CD4-positive, alpha-beta T cell (primary cell): ENCODE measurements at regions of chr11 and their contacts with region 1.

Region 1: DNA sequence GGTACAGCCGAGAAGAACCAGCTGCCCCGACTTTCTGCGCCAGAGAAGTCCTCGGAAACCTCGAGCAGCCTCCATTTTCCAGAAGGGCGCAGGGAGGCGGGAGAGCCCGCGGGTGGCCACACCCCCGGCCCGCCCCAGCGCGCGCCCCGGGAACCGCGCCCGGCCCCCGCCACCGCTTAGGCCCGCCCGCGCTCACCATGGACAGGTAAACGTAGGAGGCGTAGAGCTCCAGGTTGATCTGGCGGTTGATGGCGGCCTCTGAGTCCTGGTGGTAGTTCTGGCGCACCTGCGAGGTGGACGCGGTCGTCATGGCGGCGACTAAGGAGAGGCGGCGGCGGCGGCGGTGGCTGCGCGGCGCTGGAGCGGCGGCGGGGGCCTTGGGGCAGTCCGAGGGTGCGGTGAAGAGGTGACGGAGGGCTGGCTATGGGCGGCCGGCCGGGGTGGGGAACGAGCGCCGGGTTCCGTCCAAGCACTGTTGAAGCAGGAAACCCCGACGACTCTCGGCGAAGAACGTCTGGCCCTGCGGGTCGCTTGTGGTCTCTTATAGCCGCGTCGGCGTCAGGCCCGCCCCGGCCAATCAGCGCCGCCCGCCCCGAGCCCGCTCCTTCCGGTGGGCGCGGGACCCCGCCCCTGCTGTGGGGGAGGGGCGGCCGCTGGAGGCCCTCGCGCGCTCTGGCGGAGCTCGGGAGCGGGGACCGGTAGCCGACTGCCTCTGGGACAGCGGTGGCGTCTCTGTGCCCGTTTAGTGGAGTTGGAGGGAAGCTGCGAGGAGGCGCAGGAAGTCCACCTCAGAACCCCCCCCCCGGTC is at the start of gene FTH1:
- DNase-seq: peak; percentile 83 to 96 (median 91)
- ATAC-seq: peak; percentile 71
- H3K4me3 ChIP-seq: peak within 1 kb of the TSS; percentile 98
- H3K4me3 Mint-ChIP-seq: peak within 1 kb of the TSS; percentile 99
- H3K27ac ChIP-seq: peak within 1 kb of the TSS; percentile 87 to 94
- H3K27ac Mint-ChIP-seq: peak within 1 kb of the TSS; percentile 84
- H3K4me1 ChIP-seq: peaks cover 61% of the 10 kb centered on the region
- H3K4me1 Mint-ChIP-seq: peaks cover 74% of the 10 kb centered on the region
- H3K27me3 ChIP-seq: no peaks in the 10 kb centered on the region
- H3K27me3 Mint-ChIP-seq: peaks cover 4% of the 10 kb centered on the region
- CTCF ChIP-seq: no peak
- total RNA-seq, gene FTH1: 2,313 to 2,400 TPM

Region 2: GRCh38 chr11:61581030-61581928 is 386.0 kb before region 1 on chr11 and contains the start of gene SYT7:
- CTCF ChIA-PET with region 1: no interaction called
- POLR2A ChIA-PET with region 1: no interaction called
- intact Hi-C with region 1: loop called in 1 of 2 experiments (anchors 10 kb)
- DNase-seq: peak; percentile 86 to 96 (median 94)
- ATAC-seq: peak; percentile 86
- H3K4me3 ChIP-seq: peak within 1 kb of the TSS; percentile 28
- H3K4me3 Mint-ChIP-seq: peak within 1 kb of the TSS; percentile 97
- H3K27ac ChIP-seq: no peak within 1 kb of the TSS
- H3K27ac Mint-ChIP-seq: peak within 1 kb of the TSS; percentile 78
- H3K4me1 ChIP-seq: peaks cover 19% of the 10 kb centered on the region
- H3K4me1 Mint-ChIP-seq: peaks cover 9% of the 10 kb centered on the region
- H3K27me3 ChIP-seq: peaks cover 23 to 27% of the 10 kb centered on the region in 2 experiments
- H3K27me3 Mint-ChIP-seq: peaks cover 57% of the 10 kb centered on the region
- CTCF ChIP-seq: no peak
- total RNA-seq, gene SYT7: not detected

Region 3: GRCh38 chr11:61947486-61948210 is 19.7 kb before region 1 on chr11:
- CTCF ChIA-PET with region 1: interaction called, 12 read pairs
- POLR2A ChIA-PET with region 1: interaction called, 20 read pairs
- intact Hi-C with region 1: no loop called
- DNase-seq: peak; percentile 42 to 81 (median 58)
- ATAC-seq: peak; percentile 87
- H3K4me3 ChIP-seq: no peak overlapping the region
- H3K4me3 Mint-ChIP-seq: no peak overlapping the region
- H3K27ac ChIP-seq: no peak overlapping the region
- H3K27ac Mint-ChIP-seq: no peak overlapping the region
- H3K4me1 ChIP-seq: peaks cover 8% of the 10 kb centered on the region
- H3K4me1 Mint-ChIP-seq: no peaks in the 10 kb centered on the region
- H3K27me3 ChIP-seq: peaks cover 0 to 3% of the 10 kb centered on the region in 2 experiments
- H3K27me3 Mint-ChIP-seq: peaks cover 16% of the 10 kb centered on the region
- CTCF ChIP-seq: peak; percentile 70

Region 4: GRCh38 chr11:62025487-62026105 is 58.3 kb after region 1 on chr11:
- CTCF ChIA-PET with region 1: interaction called, 11 read pairs
- POLR2A ChIA-PET with region 1: interaction called, 177 read pairs
- intact Hi-C with region 1: loop called (anchors 1 kb)
- DNase-seq: peak; percentile 45 to 98 (median 72)
- ATAC-seq: peak; percentile 84
- H3K4me3 ChIP-seq: peak overlapping the region; percentile 9
- H3K4me3 Mint-ChIP-seq: peak overlapping the region; percentile 43
- H3K27ac ChIP-seq: peak overlapping the region; percentile 85 to 98
- H3K27ac Mint-ChIP-seq: peak overlapping the region; percentile 95
- H3K4me1 ChIP-seq: peaks cover 33% of the 10 kb centered on the region
- H3K4me1 Mint-ChIP-seq: peaks cover 29% of the 10 kb centered on the region
- H3K27me3 ChIP-seq: no peaks in the 10 kb centered on the region
- H3K27me3 Mint-ChIP-seq: no peaks in the 10 kb centered on the region
- CTCF ChIP-seq: no peak

Region 5: DNA sequence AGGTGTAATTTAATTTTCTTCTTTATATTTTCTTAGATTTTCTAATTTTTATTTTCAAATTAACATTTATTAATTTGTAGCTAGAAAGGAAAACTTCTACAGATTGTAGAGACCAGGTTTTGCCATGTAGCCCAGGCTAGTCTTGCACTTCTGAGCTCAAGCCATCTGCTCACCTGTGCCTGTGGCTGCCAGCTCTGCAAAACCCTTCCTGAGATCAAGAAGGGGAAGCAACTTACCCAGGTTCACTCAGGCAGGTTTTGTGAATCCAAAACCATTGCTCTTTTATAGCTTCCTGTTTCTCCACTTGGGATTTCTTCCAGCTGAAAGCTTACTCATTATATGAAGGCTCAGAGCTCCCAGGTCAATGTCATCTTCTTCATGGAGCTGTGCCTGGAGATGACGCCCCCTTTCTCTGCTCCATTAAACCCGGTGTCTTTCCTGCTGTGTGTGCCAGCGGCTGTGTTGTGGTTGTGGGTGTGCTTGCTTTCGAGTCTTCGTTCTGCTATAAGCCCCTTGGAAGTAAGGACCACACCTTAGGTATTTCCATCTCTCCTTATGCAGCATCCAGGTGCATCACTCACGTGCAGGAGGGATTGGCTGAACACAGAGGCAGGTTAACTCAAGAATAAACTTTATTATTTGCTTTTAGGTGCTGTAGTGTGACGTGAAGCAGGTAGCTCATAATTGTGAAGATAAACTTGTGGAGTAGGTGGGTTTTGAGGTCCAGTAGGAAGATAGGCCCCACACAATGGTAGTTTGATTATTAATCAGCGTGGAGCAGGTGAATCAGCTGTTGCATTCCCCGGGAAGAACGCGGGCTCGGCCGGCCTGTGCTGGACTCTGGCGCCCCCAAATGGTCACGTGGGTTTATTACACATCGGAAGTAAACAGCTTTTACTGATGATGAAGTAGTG is 114.3 kb after region 1 on chr11:
- CTCF ChIA-PET with region 1: interaction called, 50 read pairs
- POLR2A ChIA-PET with region 1: interaction called, 40 read pairs
- intact Hi-C with region 1: loop called in 1 of 2 experiments (anchors 2 kb)
- DNase-seq: peak; percentile 66 to 89 (median 80)
- ATAC-seq: peak; percentile 93
- H3K4me3 ChIP-seq: no peak overlapping the region
- H3K4me3 Mint-ChIP-seq: peak overlapping the region; percentile 2
- H3K27ac ChIP-seq: no peak overlapping the region
- H3K27ac Mint-ChIP-seq: no peak overlapping the region
- H3K4me1 ChIP-seq: peaks cover 9% of the 10 kb centered on the region
- H3K4me1 Mint-ChIP-seq: peaks cover 8% of the 10 kb centered on the region
- H3K27me3 ChIP-seq: no peaks in the 10 kb centered on the region
- H3K27me3 Mint-ChIP-seq: no peaks in the 10 kb centered on the region
- CTCF ChIP-seq: peak; percentile 96

Region 6: DNA sequence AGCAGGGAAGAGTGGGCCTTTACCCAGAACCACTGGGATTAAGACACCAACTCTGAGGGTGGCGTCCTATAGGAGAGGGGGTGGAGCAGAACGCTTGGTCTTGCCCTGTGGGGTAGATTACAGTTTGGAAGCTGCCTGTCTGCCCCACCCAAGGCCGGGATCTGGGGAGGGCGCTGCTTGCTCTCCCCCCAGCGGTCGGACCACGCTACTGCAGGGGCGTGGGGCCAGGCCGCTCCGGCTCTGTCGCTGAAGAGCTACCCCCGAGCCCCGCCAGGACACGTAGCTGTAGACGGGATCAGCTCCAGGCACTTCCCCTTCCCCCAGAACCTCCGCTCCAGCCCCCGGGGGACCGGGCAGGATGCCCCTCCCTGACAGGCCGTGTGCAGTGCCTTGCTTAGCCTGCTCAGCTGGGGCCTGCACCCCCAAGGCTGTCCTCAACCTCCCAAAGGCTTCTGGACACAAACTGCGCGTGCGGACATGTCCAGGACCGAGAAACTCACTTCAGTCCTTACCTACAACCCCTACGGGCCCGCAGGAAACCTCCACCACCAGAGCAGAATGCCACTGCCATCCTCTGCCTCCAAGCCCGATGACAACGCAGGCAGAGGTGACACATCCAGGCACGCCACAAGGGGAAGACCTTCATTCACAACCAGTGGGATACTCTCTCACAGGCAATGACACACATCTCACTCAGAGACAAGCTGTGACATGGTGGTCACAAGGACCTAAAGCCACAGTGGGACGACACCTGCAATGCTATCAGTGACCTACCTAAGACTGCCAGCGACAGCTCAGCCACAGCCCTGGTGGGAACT is 575.6 kb after region 1 on chr11:
- CTCF ChIA-PET with region 1: no interaction called
- POLR2A ChIA-PET with region 1: no interaction called
- intact Hi-C with region 1: loop called in 1 of 2 experiments (anchors 10 kb)
- DNase-seq: peak; percentile 58 to 89 (median 66)
- ATAC-seq: peak; percentile 56
- H3K4me3 ChIP-seq: peak overlapping the region; percentile 97
- H3K4me3 Mint-ChIP-seq: peak overlapping the region; percentile 99
- H3K27ac ChIP-seq: peak overlapping the region; percentile 77 to 84
- H3K27ac Mint-ChIP-seq: peak overlapping the region; percentile 90
- H3K4me1 ChIP-seq: peaks cover 89% of the 10 kb centered on the region
- H3K4me1 Mint-ChIP-seq: peaks cover 77% of the 10 kb centered on the region
- H3K27me3 ChIP-seq: no peaks in the 10 kb centered on the region
- H3K27me3 Mint-ChIP-seq: no peaks in the 10 kb centered on the region
- CTCF ChIP-seq: peak; percentile 99

Region 7: GRCh38 chr11:62665075-62665598 is 697.8 kb after region 1 on chr11 and contains the starts of genes C11orf98 and CSKMT:
- CTCF ChIA-PET with region 1: no interaction called
- POLR2A ChIA-PET with region 1: no interaction called
- intact Hi-C with region 1: no loop called
- DNase-seq: peak; percentile 92 to 97 (median 94)
- ATAC-seq: peak; percentile 91
- H3K4me3 ChIP-seq: peak within 1 kb of the TSS; percentile 73
- H3K4me3 Mint-ChIP-seq: peak within 1 kb of the TSS; percentile 99
- H3K27ac ChIP-seq: peak within 1 kb of the TSS; percentile 80 to 88
- H3K27ac Mint-ChIP-seq: peak within 1 kb of the TSS; percentile 96
- H3K4me1 ChIP-seq: peaks cover 48% of the 10 kb centered on the region
- H3K4me1 Mint-ChIP-seq: peaks cover 36% of the 10 kb centered on the region
- H3K27me3 ChIP-seq: no peaks in the 10 kb centered on the region
- H3K27me3 Mint-ChIP-seq: no peaks in the 10 kb centered on the region
- CTCF ChIP-seq: no peak
- total RNA-seq, gene C11orf98: 14.3 to 18.5 TPM
- total RNA-seq, gene CSKMT: 17.8 to 18.8 TPM